ENCODE measurements at regions of chr2 and their contacts with region 1.

Region 1: GRCh38 chr2:159615140-159615951 is 1.0 kb downstream of the BAZ2B start:
- DNase-seq: peak; percentile 67 to 96 (median 78)

Region 2: DNA sequence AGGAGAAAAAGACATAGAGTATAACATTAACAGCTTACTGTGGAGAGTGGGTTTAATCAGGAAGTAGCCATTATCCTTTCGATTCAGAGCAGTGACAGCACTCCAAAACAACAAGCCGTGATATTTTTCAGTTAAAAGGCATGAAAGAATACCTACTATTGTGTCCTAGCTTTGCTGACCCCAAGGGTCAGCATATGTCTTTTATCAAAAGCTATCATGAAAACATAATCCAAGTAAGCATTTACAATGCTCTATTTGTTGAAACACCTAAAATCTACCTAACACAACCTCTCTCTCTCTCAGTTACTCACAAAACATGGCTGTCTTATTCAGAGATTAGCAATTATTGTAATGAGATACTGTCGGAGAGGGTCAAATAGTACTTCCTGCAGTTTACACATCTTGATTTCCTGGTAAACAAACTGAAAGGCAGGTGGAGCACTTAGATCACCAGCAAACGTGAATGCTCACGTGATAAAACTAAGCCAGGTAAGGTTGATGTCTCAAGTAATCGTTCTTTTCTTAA is 99.0 kb before region 1 on chr2:
- intact Hi-C with region 1: loop called (anchors 10 kb)
- DNase-seq: no peak

Region 3: DNA sequence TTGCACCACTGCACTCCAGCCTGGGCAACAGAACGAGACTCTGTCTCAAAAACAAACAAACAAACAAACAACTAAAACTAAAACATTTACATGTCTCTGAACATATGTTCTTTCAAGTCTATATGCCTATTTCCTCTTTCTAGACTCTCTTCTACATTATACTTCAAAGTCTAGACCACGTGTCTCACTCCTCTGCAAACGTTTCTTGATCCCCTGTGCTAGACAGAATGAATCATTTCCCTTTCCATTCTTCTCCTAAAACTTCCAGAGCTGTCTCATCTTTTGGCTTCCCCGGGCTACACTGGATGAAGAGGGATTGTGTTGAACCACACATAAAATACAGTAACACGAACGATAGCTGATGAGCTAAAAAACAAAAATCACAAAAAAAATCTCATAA is 66.1 kb before region 1 on chr2:
- intact Hi-C with region 1: no loop called
- DNase-seq: no peak

Region 4: GRCh38 chr2:159684796-159685195 is 69.5 kb after region 1 on chr2:
- intact Hi-C with region 1: no loop called
- DNase-seq: no peak

Measured in posterior cingulate gyrus (tissue), 11 donors.